ENCODE measurements at regions of chr12 and their contacts with region 1.

Region 1: DNA sequence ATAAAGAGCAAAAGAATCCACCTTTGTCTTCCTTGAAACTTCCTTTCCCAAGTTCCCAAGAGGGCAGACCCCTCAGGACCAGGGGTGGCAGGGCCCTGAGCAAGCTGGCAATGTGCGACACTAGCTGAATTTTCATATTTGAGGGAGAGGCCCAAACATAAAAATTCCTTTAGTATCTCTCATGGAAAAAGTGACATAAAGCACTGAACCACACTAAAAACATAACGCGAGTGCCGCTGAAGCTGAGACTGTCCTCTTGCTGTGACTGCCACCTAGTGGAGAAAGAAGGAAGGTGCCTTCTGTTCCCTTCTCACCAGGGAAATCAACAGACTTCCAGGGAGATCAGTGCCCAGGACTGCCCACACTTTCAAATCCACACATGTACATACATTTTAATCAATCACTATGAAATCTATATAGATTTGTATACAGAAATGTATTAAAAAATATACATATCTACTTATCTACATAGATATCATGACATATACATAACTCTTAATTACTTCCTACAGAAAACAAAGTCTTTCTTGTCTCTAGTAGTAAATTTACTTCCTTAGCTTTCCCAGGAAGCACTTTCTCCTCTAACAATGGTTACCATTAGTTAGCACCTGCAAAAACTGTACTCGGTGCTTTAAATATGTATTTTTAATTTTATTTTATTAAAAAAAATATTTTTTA is 53.8 kb downstream of the SSH1 start:
- DNase-seq: peak; percentile 92
- H3K4me3 Mint-ChIP-seq: no peak overlapping the region
- H3K27ac Mint-ChIP-seq: peak overlapping the region; percentile 78
- H3K4me1 Mint-ChIP-seq: peaks cover 10% of the 10 kb centered on the region
- H3K27me3 Mint-ChIP-seq: no peaks in the 10 kb centered on the region

Region 2: GRCh38 chr12:108618079-108618952 is 185.3 kb before region 1 on chr12:
- intact Hi-C with region 1: loop called (anchors 1 kb)
- DNase-seq: peak; percentile 93
- H3K4me3 Mint-ChIP-seq: no peak overlapping the region
- H3K27ac Mint-ChIP-seq: peak overlapping the region; percentile 83
- H3K4me1 Mint-ChIP-seq: peaks cover 50% of the 10 kb centered on the region
- H3K27me3 Mint-ChIP-seq: no peaks in the 10 kb centered on the region

Region 3: GRCh38 chr12:108664338-108665258 is 139.0 kb before region 1 on chr12:
- intact Hi-C with region 1: loop called (anchors 1 kb)
- DNase-seq: peak; percentile 95
- H3K4me3 Mint-ChIP-seq: peak overlapping the region; percentile 58
- H3K27ac Mint-ChIP-seq: peak overlapping the region; percentile 77
- H3K4me1 Mint-ChIP-seq: peaks cover 15% of the 10 kb centered on the region
- H3K27me3 Mint-ChIP-seq: no peaks in the 10 kb centered on the region

Region 4: DNA sequence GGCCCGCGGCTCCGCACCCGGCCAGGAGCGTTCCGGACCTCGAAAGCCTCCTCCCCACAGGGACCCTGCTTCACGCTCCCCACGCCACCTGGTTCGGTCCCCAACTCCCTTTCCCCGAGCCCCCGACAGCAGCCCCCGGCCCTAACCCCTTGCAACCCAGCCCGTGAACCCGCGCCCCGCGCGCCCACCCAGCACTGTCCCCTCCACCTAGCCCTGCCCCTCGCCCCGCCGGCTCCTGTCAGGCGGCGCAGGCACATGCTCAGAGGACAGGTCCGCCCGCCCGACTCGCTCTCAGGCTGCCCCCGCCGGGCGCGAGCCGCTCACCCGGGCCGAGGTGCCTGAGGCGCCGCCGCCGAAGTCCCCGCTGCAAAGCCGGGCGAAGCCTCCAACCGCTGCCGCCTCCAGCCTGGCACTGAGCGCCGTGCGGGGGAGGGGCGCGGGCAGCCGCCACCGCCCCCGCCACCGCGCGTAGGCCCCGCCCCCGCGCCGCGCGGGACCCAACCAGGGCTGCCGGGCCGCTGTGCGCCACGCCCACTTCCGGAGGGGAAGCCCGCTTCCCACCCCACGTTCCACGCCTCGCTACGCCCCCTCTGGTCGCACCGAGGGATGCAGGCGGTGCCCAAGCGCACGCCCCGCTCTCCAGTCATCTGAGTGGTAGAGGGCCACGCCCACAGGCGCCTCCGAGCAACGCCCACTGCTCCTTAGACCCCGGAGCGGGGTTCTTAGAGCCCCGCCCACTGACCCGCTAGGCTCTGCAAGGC is 72.3 kb before region 1 on chr12 and contains the start of gene CORO1C:
- intact Hi-C with region 1: loop called (anchors 2 kb)
- DNase-seq: peak; percentile 99
- H3K4me3 Mint-ChIP-seq: peak within 1 kb of the TSS; percentile 94
- H3K27ac Mint-ChIP-seq: peak within 1 kb of the TSS; percentile 95
- H3K4me1 Mint-ChIP-seq: peaks cover 41% of the 10 kb centered on the region
- H3K27me3 Mint-ChIP-seq: peaks cover 6% of the 10 kb centered on the region
- total RNA-seq, gene CORO1C: 64.6 and 70.1 TPM in 2 replicates

Region 5: GRCh38 chr12:108838194-108839017 is 34.8 kb after region 1 on chr12:
- intact Hi-C with region 1: no loop called
- DNase-seq: peak; percentile 91
- H3K4me3 Mint-ChIP-seq: peak overlapping the region; percentile 74
- H3K27ac Mint-ChIP-seq: peak overlapping the region; percentile 95
- H3K4me1 Mint-ChIP-seq: peaks cover 47% of the 10 kb centered on the region
- H3K27me3 Mint-ChIP-seq: no peaks in the 10 kb centered on the region

Region 6: DNA sequence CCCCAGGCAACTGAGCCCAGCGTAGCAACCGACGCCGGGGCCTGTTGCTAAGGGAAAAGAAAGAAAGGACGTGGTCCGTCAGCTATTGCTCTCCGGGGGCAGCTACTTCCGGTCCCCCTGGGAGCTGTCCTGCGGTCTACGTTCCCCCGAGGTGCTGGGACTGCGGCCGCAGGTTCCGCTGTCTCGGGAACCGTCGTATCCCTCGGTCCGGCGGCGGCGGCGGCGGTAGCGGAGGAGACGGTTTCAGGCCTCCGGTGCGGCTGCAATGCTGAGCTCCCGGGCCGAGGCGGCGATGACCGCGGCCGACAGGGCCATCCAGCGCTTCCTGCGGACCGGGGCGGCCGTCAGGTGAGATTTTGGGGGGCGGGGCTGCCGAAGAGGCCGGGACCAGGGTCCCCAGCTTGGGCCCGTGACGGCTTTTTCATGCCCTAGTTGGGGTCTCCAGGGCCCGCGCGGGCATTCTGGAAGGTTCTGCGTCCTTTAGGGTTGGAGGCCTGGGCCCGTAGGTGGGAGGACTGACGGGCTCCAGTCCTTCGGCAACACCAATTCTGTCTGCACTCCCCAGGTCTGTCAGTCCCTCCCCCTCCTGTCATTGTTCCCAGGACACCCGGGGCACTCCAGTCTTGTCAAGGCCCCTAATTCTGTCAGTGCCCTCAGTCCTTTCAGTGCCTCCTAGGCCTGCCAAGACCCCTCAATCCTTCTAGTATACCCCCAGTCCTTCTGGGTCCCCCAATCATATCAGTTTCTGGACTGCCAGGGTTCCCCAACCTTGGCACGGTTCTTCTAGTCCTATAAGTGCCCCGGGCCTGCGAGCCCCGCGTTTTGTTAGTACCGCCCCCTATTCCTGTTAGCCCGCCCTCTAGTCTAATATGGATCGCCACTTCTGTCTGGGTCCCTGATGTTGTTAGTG is 249.1 kb after region 1 on chr12 and contains the start of gene USP30:
- intact Hi-C with region 1: loop called (anchors 5 kb)
- DNase-seq: peak; percentile 95
- H3K4me3 Mint-ChIP-seq: peak within 1 kb of the TSS; percentile 86
- H3K27ac Mint-ChIP-seq: peak within 1 kb of the TSS; percentile 95
- H3K4me1 Mint-ChIP-seq: peaks cover 8% of the 10 kb centered on the region
- H3K27me3 Mint-ChIP-seq: no peaks in the 10 kb centered on the region
- total RNA-seq, gene USP30: 6.6 and 6.9 TPM in 2 replicates

Measured in activated CD4-positive, alpha-beta T cell treated with anti-CD3 and anti-CD28 coated beads, Interleukin-2, amount 10 ng/mL, durations not matched to agents 24 days and 14 days (primary cell).